ENCODE measurements at regions of chr17 and their contacts with region 1.

Region 1: GRCh38 chr17:40559954-40560591 is 5.2 kb downstream of the CCR7 start:
- DNase-seq: peak; percentile 79
- ATAC-seq: peak; percentile 96
- H3K4me3 ChIP-seq: peak overlapping the region; percentile 21; a peak in 2 of 4 replicates
- H3K27ac ChIP-seq: peak overlapping the region; percentile 11; the same call in 1 of the 2 replicates
- H3K4me1 ChIP-seq: peaks cover 10 to 16% of the 10 kb centered on the region in 2 experiments
- H3K27me3 ChIP-seq: no peaks in the 10 kb centered on the region
- CTCF ChIP-seq: peak; percentile 97 to 99 (median 97)
- POLR2A ChIP-seq: no peak
- RAD21 ChIP-seq: peak; percentile 99

Region 2: GRCh38 chr17:40417609-40418427 is 142.3 kb before region 1 on chr17 and contains the start of gene TOP2A:
- CTCF ChIA-PET with region 1: interaction called, 11 read pairs
- POLR2A ChIA-PET with region 1: interaction called, 3 read pairs
- RAD21 ChIA-PET with region 1: no interaction called
- intact Hi-C with region 1: no loop called
- DNase-seq: peak; percentile 100
- ATAC-seq: peak; percentile 95
- H3K4me3 ChIP-seq: peak within 1 kb of the TSS; percentile 81 to 94
- H3K27ac ChIP-seq: peak within 1 kb of the TSS; percentile 91
- H3K4me1 ChIP-seq: peaks cover 13 to 28% of the 10 kb centered on the region in 2 experiments; a peak in 3 of 4 replicates
- H3K27me3 ChIP-seq: no peaks in the 10 kb centered on the region
- CTCF ChIP-seq: no peak
- POLR2A ChIP-seq: peak; percentile 68
- RAD21 ChIP-seq: no peak
- total RNA-seq, gene TOP2A: 141 TPM

Region 3: DNA sequence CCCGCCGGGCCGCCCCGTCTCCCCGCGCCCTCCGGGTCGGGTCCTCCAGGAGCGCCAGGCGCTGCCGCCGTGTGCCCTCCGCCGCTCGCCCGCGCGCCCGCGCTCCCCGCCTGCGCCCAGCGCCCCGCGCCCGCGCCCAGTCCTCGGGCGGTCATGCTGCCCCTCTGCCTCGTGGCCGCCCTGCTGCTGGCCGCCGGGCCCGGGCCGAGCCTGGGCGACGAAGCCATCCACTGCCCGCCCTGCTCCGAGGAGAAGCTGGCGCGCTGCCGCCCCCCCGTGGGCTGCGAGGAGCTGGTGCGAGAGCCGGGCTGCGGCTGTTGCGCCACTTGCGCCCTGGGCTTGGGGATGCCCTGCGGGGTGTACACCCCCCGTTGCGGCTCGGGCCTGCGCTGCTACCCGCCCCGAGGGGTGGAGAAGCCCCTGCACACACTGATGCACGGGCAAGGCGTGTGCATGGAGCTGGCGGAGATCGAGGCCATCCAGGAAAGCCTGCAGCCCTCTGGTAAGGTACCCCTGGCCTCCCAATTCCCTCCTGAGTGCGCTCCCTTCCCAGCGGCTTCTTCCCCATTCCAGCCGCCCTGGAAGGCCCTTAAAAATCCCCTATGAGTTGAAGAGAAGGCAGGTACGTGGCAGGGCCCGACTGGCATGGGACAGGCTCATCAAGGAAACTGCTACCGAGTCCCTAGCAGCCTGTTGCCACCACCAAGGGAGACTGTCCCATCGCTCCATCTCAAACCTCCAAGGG is 116.3 kb before region 1 on chr17:
- CTCF ChIA-PET with region 1: interaction called, 7 read pairs
- POLR2A ChIA-PET with region 1: no interaction called
- RAD21 ChIA-PET with region 1: interaction called, 3 to 5 read pairs
- intact Hi-C with region 1: loop called (anchors 1 kb)
- DNase-seq: no peak
- ATAC-seq: 0 out of 2 replicates have a peak, but pooled peaks have one; percentile 26
- H3K4me3 ChIP-seq: no peak overlapping the region
- H3K27ac ChIP-seq: no peak overlapping the region
- H3K4me1 ChIP-seq: no peaks in the 10 kb centered on the region
- H3K27me3 ChIP-seq: no peaks in the 10 kb centered on the region
- CTCF ChIP-seq: no peak
- POLR2A ChIP-seq: no peak
- RAD21 ChIP-seq: no peak

Region 4: GRCh38 chr17:40475234-40475908 is 84.7 kb before region 1 on chr17:
- CTCF ChIA-PET with region 1: interaction called, 11 read pairs
- POLR2A ChIA-PET with region 1: no interaction called
- RAD21 ChIA-PET with region 1: interaction called in 1 of 2 experiments, 4 read pairs
- intact Hi-C with region 1: no loop called
- DNase-seq: no peak
- ATAC-seq: no peak; the same call in 1 of the 2 replicates
- H3K4me3 ChIP-seq: no peak overlapping the region
- H3K27ac ChIP-seq: peak overlapping the region; percentile 2; the same call in 1 of the 2 replicates
- H3K4me1 ChIP-seq: peaks cover 10 to 61% of the 10 kb centered on the region in 2 experiments; a peak in 3 of 4 replicates
- H3K27me3 ChIP-seq: no peaks in the 10 kb centered on the region
- CTCF ChIP-seq: no peak
- POLR2A ChIP-seq: no peak
- RAD21 ChIP-seq: no peak

Region 5: DNA sequence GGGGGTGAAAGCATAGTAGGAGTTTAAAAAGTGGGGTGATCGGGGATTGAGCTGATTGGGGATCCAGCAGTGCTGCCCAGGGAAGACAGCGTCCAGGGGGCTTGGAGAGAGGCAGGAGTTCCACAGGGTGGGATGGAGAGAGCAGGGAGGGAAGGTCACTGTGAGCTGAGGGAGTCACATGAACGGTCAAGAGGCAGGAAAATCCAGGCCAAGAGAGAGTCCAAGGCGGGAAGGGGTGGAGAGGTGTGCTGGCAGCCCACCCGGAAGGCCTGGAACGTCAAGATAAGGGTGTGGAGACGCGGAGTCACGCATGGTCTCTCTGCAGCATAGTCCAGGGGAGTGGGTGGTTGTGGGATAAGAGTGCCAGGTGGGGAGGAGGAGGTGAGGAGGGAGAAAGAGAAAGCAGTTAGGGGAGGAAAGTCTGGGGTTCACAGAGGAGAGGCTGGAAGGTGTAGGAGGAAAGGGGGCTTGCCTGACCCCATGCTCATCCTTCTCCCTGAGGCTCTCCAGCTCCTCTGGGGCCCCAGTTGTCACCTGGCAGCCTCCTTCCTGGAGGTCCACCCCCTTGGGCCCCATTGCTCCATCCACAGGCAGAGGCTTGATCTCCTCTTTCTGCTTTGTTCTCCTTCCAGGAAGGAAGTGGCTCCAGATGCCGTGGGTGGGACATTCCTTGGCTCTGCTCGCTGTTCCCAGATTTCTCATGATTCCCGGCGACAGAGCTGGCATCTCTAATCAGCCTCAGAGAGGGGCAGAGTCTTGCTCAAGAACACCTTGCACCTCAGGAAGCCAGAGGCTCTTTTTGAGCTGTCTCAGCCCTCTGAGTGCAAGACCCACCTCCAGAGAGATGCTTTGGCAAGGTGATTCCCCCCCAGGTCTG is 23.5 kb before region 1 on chr17:
- CTCF ChIA-PET with region 1: interaction called, 22 read pairs
- POLR2A ChIA-PET with region 1: interaction called, 5 read pairs
- RAD21 ChIA-PET with region 1: interaction called, 7 to 14 read pairs
- intact Hi-C with region 1: no loop called
- DNase-seq: no peak
- ATAC-seq: peak; percentile 39; the same call in 1 of the 2 replicates
- H3K4me3 ChIP-seq: peak overlapping the region in 1 of 2 experiments; percentile 13; a peak in 1 of 4 replicates
- H3K27ac ChIP-seq: peak overlapping the region; percentile 54
- H3K4me1 ChIP-seq: peaks cover 35 to 57% of the 10 kb centered on the region in 2 experiments
- H3K27me3 ChIP-seq: no peaks in the 10 kb centered on the region
- CTCF ChIP-seq: no peak
- POLR2A ChIP-seq: no peak
- RAD21 ChIP-seq: no peak